CD4-positive, alpha-beta memory T cell (primary cell): ENCODE measurements at regions of chr10 and their contacts with region 1.

Region 1: GRCh38 chr10:68208424-68209042 is 23.4 kb downstream of the ATOH7 start:
- DNase-seq: no peak
- H3K4me3 ChIP-seq: no peak overlapping the region
- H3K4me3 Mint-ChIP-seq: no peak overlapping the region
- H3K27ac ChIP-seq: no peak overlapping the region
- H3K27ac Mint-ChIP-seq: peak overlapping the region in 1 of 7 donors; percentile 42
- H3K4me1 ChIP-seq: no peaks in the 10 kb centered on the region
- H3K4me1 Mint-ChIP-seq: no peaks in the 10 kb centered on the region
- H3K27me3 ChIP-seq: no peaks in the 10 kb centered on the region
- H3K27me3 Mint-ChIP-seq: peaks cover 10 to 12% of the 10 kb centered on the region in 2 donors

Region 2: DNA sequence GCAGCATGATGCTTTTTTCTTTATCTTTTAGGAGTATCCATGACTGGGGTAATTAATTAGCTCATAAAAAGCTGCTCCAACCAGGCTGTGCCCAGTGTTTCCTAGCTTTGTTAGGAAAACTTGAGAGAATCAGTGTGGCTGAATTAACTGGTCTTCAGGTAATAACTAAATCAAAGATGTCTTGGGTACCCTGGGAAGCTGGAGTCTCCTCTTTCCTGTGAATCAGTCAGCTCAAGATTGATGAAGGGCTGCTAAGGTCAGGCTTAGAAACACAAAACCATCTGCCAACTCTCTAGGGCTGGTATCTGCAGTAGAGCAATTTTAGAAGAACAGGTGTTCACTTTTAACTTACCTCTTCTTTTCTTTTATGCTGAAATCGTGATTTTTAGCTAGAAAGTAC is 44.8 kb after region 1 on chr10:
- CTCF ChIA-PET with region 1: no interaction called
- POLR2A ChIA-PET with region 1: no interaction called
- intact Hi-C with region 1: no loop called
- DNase-seq: no peak
- H3K4me3 ChIP-seq: no peak overlapping the region
- H3K4me3 Mint-ChIP-seq: no peak overlapping the region
- H3K27ac ChIP-seq: no peak overlapping the region
- H3K27ac Mint-ChIP-seq: no peak overlapping the region
- H3K4me1 ChIP-seq: no peaks in the 10 kb centered on the region
- H3K4me1 Mint-ChIP-seq: peaks cover 0 to 1% (median 0%) of the 10 kb centered on the region in 4 donors
- H3K27me3 ChIP-seq: no peaks in the 10 kb centered on the region
- H3K27me3 Mint-ChIP-seq: peaks cover 0 to 5% of the 10 kb centered on the region in 2 donors

Region 3: DNA sequence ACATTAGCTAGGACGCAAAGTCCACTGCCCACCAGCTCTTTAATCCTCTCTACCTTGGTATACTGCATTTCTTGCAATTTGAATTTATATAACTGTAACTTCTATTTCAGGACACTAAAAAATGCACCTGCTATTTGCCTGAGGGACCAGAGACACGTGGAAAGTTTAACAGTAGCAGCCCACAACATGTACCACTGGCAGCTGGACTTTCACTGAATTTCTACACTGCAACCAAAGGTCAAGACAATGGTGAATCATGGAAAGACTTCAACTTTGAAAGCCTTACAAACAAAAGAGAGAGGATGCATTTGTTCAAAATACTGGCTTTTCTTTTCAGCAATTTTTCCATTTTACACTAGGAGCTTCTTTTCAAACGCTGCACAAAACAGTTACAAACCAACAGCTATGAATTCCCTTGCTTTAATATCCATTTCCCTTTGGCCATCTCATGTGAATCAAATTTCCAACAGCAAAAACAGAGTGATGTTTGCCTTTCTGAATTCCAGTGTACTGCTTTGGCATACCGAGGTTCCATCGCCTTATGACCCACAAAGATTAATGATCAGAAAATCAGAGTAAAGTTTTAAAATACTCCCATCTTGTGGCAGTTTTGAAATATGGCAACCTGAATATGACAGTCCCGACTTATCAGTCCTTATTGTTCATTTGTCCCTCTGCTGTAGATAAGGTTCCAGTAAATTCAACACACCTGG is 93.4 kb after region 1 on chr10:
- CTCF ChIA-PET with region 1: interaction called, 10 read pairs
- POLR2A ChIA-PET with region 1: no interaction called
- intact Hi-C with region 1: loop called (anchors 1 kb)
- DNase-seq: peak in 4 of 5 donors; percentile 16 to 29 (median 24)
- H3K4me3 ChIP-seq: no peak overlapping the region
- H3K4me3 Mint-ChIP-seq: no peak overlapping the region
- H3K27ac ChIP-seq: no peak overlapping the region
- H3K27ac Mint-ChIP-seq: no peak overlapping the region
- H3K4me1 ChIP-seq: no peaks in the 10 kb centered on the region
- H3K4me1 Mint-ChIP-seq: peaks cover 0 to 1% (median 0%) of the 10 kb centered on the region in 4 donors
- H3K27me3 ChIP-seq: no peaks in the 10 kb centered on the region
- H3K27me3 Mint-ChIP-seq: no peaks in the 10 kb centered on the region

Region 4: DNA sequence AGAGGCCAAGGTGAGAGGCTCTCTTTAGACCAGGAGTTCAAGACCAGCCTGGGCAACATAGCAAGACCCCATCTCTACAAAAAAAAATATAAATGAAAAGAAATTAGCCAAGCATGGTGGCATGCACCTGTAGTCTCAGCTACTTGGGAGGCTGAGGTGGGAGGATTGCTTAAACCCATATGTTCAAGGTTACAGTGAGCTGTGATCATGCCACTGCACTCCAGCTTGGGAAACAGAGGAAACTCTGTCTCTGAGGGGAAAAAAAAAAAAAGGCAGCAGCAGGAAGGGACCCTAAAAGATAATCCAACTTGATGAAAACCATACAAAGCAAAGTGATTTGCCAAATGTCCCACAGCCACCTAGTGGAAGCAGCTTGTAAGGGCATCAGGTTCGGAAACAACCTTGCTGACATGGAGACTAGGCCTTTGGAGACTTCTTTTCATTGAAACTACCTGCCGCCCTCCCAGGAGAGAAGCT is 139.8 kb after region 1 on chr10:
- CTCF ChIA-PET with region 1: interaction called, 41 read pairs
- POLR2A ChIA-PET with region 1: no interaction called
- intact Hi-C with region 1: loop called (anchors 1 kb)
- DNase-seq: peak; percentile 42 to 58 (median 49)
- H3K4me3 ChIP-seq: no peak overlapping the region
- H3K4me3 Mint-ChIP-seq: no peak overlapping the region
- H3K27ac ChIP-seq: no peak overlapping the region
- H3K27ac Mint-ChIP-seq: peak overlapping the region; percentile 4 to 85 (median 79)
- H3K4me1 ChIP-seq: no peaks in the 10 kb centered on the region
- H3K4me1 Mint-ChIP-seq: peaks cover 2 to 8% (median 5%) of the 10 kb centered on the region in 4 donors
- H3K27me3 ChIP-seq: no peaks in the 10 kb centered on the region
- H3K27me3 Mint-ChIP-seq: no peaks in the 10 kb centered on the region

Region 5: DNA sequence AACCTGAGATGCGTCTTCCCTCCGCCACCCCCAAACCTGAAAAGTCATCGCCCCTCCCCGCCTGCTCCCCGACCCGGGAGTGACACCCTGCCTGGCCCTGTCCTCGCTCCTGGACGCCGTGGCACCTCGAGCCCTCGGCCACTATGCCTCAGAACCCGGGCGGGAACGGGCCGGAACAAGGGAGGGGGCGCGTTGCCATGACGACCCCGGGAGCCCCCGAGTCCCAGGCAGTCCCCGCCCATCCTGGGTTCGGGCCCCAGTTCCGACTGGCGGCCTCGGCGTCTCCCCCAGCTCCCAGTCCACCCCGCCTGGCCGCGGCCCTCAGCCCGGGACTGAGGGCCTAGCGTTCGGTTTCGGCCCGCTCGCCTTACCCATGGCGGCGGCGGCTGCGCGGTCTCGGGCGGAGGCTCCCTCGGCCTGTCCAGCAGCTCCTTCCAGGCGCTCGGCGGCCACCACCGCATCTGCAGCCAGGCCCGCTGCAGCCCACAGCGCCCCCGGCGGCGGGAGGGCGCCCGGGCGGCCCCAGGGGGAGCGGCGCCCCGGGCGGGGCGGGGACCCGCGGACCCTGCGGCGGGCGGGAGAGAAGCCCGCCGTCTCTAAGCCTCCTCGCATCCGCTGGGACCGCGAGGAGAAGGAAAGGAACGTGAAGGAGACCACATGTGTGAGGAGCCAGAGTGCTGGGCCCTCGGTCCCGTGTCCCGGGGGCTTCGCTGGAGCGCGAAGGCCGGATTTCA is 198.4 kb after region 1 on chr10 and contains the start of gene RUFY2:
- CTCF ChIA-PET with region 1: interaction called, 4 read pairs
- POLR2A ChIA-PET with region 1: no interaction called
- intact Hi-C with region 1: loop called (anchors 5 kb)
- DNase-seq: peak; percentile 70 to 85 (median 74)
- H3K4me3 ChIP-seq: peak within 1 kb of the TSS; percentile 89 to 94
- H3K4me3 Mint-ChIP-seq: peak within 1 kb of the TSS; percentile 89 to 95 (median 90)
- H3K27ac ChIP-seq: peak within 1 kb of the TSS; percentile 74
- H3K27ac Mint-ChIP-seq: peak within 1 kb of the TSS; percentile 65 to 91 (median 84)
- H3K4me1 ChIP-seq: peaks cover 22% of the 10 kb centered on the region
- H3K4me1 Mint-ChIP-seq: peaks cover 14 to 18% (median 18%) of the 10 kb centered on the region in 4 donors
- H3K27me3 ChIP-seq: no peaks in the 10 kb centered on the region
- H3K27me3 Mint-ChIP-seq: no peaks in the 10 kb centered on the region
- total RNA-seq, gene RUFY2: 24.6 to 24.9 TPM